ENCODE measurements at regions of chr2 and their contacts with region 1.

Region 1: DNA sequence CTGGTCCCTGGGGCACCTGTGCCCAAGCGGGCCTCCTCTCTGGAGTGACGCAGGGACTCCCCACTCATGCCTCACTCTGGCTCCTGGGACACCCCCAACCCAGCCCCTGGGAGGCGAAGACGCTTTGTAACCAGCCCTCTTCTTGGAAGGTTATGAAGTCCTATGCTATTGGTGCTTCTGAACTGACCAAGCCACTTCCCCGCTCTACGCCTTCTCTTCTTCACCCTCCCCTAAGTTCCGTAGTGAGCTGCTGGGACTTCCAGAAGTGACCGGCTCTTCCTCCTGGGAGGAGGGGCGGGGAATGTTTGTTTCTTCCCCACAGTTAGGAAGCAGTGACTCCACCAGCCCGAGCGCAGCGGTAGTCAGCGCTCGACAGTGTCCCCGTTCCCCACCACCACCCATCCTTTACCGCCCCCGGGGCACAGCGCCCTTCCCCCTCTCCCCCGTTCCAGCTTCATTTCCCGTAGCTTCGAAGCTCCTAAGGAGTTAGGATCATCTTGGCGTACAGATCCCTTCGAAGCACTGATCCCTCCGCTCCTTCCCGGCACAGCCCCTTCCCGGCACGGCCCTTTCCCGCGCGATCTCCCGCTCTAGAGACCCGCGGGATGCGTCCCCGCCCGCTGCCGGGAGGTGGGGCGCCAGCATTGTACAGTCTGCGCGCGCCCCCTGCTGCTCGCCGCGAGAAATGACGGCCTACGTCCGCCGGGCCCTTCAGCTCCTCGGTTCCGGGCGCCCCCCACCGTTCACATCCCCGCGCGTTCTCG is 25.3 kb upstream of the NOTO start:
- DNase-seq: peak; percentile 82 to 87 (median 85)
- H3K4me3 ChIP-seq: peak overlapping the region; percentile 27 to 80 (median 59)
- H3K27ac ChIP-seq: no peak overlapping the region
- H3K4me1 ChIP-seq: peaks cover 0 to 32% (median 26%) of the 10 kb centered on the region in 4 experiments
- H3K27me3 ChIP-seq: peaks cover 0 to 37% (median 12%) of the 10 kb centered on the region in 5 experiments

Region 2: GRCh38 chr2:72871880-72872279 is 305.2 kb before region 1 on chr2:
- CTCF ChIA-PET with region 1: no interaction called
- POLR2A ChIA-PET with region 1: no interaction called
- DNase-seq: no peak
- H3K4me3 ChIP-seq: no peak overlapping the region
- H3K27ac ChIP-seq: no peak overlapping the region
- H3K4me1 ChIP-seq: no peaks in the 10 kb centered on the region
- H3K27me3 ChIP-seq: peaks cover 5 to 28% (median 12%) of the 10 kb centered on the region in 5 experiments

Region 3: GRCh38 chr2:72993147-72993932 is 183.7 kb before region 1 on chr2:
- CTCF ChIA-PET with region 1: interaction called, 17 read pairs
- POLR2A ChIA-PET with region 1: interaction called, 4 read pairs
- DNase-seq: peak; percentile 46 to 63 (median 47)
- H3K4me3 ChIP-seq: no peak overlapping the region
- H3K27ac ChIP-seq: no peak overlapping the region
- H3K4me1 ChIP-seq: no peaks in the 10 kb centered on the region
- H3K27me3 ChIP-seq: no peaks in the 10 kb centered on the region

Region 4: GRCh38 chr2:73043929-73044832 is 132.9 kb before region 1 on chr2:
- CTCF ChIA-PET with region 1: no interaction called
- POLR2A ChIA-PET with region 1: no interaction called
- DNase-seq: peak in 2 of 3 donors; percentile 45 to 50
- H3K4me3 ChIP-seq: no peak overlapping the region
- H3K27ac ChIP-seq: no peak overlapping the region
- H3K4me1 ChIP-seq: peaks cover 0 to 13% (median 6%) of the 10 kb centered on the region in 4 experiments
- H3K27me3 ChIP-seq: no peaks in the 10 kb centered on the region

Region 5: GRCh38 chr2:73156539-73157124 is 20.4 kb before region 1 on chr2:
- CTCF ChIA-PET with region 1: interaction called, 14 read pairs
- POLR2A ChIA-PET with region 1: no interaction called
- DNase-seq: peak; percentile 62 to 76 (median 76)
- H3K4me3 ChIP-seq: peak overlapping the region in 1 of 7 experiments; percentile 48
- H3K27ac ChIP-seq: no peak overlapping the region
- H3K4me1 ChIP-seq: peaks cover 0 to 7% (median 2%) of the 10 kb centered on the region in 4 experiments
- H3K27me3 ChIP-seq: peaks cover 2 to 10% (median 8%) of the 10 kb centered on the region in 5 experiments

Region 6: GRCh38 chr2:73187549-73187948 is 10.5 kb after region 1 on chr2:
- CTCF ChIA-PET with region 1: interaction called, 16 read pairs
- POLR2A ChIA-PET with region 1: no interaction called
- DNase-seq: peak in 1 of 3 donors; percentile 31
- H3K4me3 ChIP-seq: no peak overlapping the region
- H3K27ac ChIP-seq: no peak overlapping the region
- H3K4me1 ChIP-seq: no peaks in the 10 kb centered on the region
- H3K27me3 ChIP-seq: peaks cover 0 to 3% (median 0%) of the 10 kb centered on the region in 5 experiments

Region 7: GRCh38 chr2:73202156-73203054 is 25.3 kb after region 1 on chr2 and contains the start of gene NOTO:
- CTCF ChIA-PET with region 1: interaction called, 14 read pairs
- POLR2A ChIA-PET with region 1: no interaction called
- DNase-seq: peak in 2 of 3 donors; percentile 20 to 34
- H3K4me3 ChIP-seq: peak within 1 kb of the TSS in 5 of 7 experiments; percentile 10 to 48 (median 24)
- H3K27ac ChIP-seq: no peak within 1 kb of the TSS
- H3K4me1 ChIP-seq: peaks cover 0 to 17% (median 14%) of the 10 kb centered on the region in 4 experiments
- H3K27me3 ChIP-seq: peaks cover 15 to 62% (median 17%) of the 10 kb centered on the region in 5 experiments

Region 8: GRCh38 chr2:73212448-73213176 is 35.5 kb after region 1 on chr2:
- CTCF ChIA-PET with region 1: interaction called, 59 read pairs
- POLR2A ChIA-PET with region 1: interaction called, 3 read pairs
- DNase-seq: peak; percentile 74 to 88 (median 82)
- H3K4me3 ChIP-seq: peak overlapping the region in 3 of 7 experiments; percentile 8 to 77 (median 8)
- H3K27ac ChIP-seq: no peak overlapping the region
- H3K4me1 ChIP-seq: peaks cover 5 to 28% (median 23%) of the 10 kb centered on the region in 4 experiments
- H3K27me3 ChIP-seq: peaks cover 0 to 3% (median 0%) of the 10 kb centered on the region in 5 experiments

Region 9: DNA sequence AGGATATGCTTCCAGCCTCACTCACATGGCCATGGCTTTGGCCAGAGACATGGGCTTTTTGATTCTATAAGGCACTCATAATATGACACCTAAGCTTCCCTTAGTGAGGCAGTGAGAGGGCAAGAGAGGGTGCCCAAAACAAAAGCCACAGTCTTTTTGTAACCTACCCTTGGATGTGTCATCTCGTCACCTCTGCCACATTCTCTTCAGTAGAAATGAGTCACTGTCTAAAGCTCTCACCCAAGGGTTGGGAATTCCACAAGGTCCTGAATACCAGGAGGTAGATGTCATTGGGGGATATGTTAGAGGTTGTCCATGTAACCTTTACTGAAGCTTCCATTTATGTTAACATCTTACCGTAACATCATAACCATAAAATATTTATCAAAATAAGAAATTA is 317.0 kb after region 1 on chr2:
- CTCF ChIA-PET with region 1: no interaction called
- POLR2A ChIA-PET with region 1: no interaction called
- DNase-seq: no peak
- H3K4me3 ChIP-seq: no peak overlapping the region
- H3K27ac ChIP-seq: no peak overlapping the region
- H3K4me1 ChIP-seq: peaks cover 0 to 5% (median 3%) of the 10 kb centered on the region in 4 experiments
- H3K27me3 ChIP-seq: no peaks in the 10 kb centered on the region

Region 10: GRCh38 chr2:73970850-73971471 is 793.9 kb after region 1 on chr2:
- CTCF ChIA-PET with region 1: no interaction called
- POLR2A ChIA-PET with region 1: no interaction called
- DNase-seq: peak; percentile 89 to 94 (median 93)
- H3K4me3 ChIP-seq: peak overlapping the region in 6 of 7 experiments; percentile 27 to 69 (median 44)
- H3K27ac ChIP-seq: peak overlapping the region; percentile 66 to 74
- H3K4me1 ChIP-seq: peaks cover 28 to 56% (median 51%) of the 10 kb centered on the region in 4 experiments
- H3K27me3 ChIP-seq: no peaks in the 10 kb centered on the region

Measured in common myeloid progenitor, CD34-positive (primary cell).